Activated CD4-positive, alpha-beta T cell treated with anti-CD3 and anti-CD28 coated beads, Interleukin-2, amount 10 ng/mL, durations not matched to agents 7 days and 5 days (primary cell): ENCODE measurements at regions of chr12 and their contacts with region 1.

Region 1: DNA sequence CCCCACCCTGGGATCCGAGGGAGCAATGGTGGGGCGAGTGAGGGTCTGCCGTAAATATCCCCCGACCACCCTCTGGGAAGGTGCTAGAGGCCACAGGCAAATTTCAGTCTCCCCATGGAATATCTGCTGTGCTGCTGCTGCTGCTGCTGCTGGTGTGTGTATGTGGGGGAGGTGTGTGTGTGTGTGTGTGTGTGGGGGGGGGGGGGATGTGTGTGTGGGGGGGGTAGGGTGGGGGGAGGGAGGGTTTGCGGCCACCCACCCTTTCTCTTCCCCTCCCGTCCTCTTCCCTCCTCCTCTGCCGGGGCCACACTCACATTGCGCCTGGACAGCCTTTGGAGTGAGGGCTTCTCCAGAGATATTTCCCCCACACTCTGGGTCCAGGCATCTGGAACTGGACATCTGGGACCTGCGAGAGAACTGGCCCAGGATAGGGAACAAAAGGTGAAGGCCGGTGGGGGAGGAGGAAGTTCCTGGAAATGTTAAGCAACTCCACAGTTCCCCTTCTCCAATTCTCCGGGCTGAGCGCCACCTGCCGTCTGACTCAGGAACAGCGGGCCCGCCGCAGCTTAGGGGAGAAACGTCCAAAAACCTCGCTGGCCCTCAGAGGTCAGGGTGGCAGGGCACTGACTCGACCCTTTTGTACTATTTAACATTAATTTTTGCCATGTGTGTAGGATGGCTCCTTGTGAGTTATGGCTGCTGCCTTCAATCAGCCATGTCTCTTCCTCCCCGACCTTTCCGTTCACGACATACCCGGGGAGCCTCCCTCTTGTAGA is at the start of gene C1RL:
- DNase-seq: peak; percentile 76
- H3K4me3 Mint-ChIP-seq: peak within 1 kb of the TSS; percentile 96
- H3K27ac Mint-ChIP-seq: peak within 1 kb of the TSS; percentile 96
- H3K4me1 Mint-ChIP-seq: peaks cover 68% of the 10 kb centered on the region
- H3K27me3 Mint-ChIP-seq: no peaks in the 10 kb centered on the region
- total RNA-seq, gene C1RL: 31.2 to 31.4 TPM

Region 2: DNA sequence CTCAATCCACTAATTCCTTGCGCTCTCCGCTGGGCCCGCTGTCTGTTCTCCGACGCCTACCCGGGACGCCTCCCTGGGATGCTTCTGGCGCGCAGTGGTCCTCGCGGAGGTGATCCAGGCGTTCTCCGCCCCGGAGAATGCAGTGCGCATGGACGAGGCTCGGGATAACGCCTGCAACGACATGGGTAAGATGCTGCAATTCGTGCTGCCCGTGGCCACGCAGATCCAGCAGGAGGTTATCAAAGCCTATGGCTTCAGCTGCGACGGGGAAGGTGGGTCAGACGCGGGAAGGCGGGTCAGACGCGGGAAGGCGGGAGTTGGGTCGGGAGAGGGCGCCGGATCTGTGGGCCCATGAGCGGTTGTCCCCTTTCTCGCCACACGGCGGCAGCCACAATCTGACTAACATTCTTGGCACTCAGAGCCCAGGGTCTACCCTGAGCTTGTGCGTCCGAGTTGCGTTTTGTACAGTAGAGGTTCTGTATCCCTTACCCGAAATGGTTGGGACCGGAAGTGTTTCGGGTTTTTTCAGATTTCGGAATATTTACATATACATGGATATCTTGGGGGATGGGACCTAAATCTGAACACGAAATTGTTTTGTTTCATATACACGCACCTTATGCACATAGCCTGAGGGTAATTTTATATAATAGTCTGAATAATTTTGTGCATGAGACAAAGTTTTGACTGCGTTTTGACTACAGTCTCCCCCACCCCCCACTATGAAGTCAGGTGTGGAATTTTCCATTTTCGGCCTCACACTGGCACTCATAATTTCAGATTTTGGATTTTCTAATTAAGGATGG is 164.4 kb before region 1 on chr12:
- CTCF ChIA-PET with region 1: interaction called, 15 read pairs
- POLR2A ChIA-PET with region 1: interaction called, 28 read pairs
- DNase-seq: peak; percentile 92
- H3K4me3 Mint-ChIP-seq: peak overlapping the region; percentile 97
- H3K27ac Mint-ChIP-seq: peak overlapping the region; percentile 96
- H3K4me1 Mint-ChIP-seq: peaks cover 68% of the 10 kb centered on the region
- H3K27me3 Mint-ChIP-seq: no peaks in the 10 kb centered on the region

Region 3: DNA sequence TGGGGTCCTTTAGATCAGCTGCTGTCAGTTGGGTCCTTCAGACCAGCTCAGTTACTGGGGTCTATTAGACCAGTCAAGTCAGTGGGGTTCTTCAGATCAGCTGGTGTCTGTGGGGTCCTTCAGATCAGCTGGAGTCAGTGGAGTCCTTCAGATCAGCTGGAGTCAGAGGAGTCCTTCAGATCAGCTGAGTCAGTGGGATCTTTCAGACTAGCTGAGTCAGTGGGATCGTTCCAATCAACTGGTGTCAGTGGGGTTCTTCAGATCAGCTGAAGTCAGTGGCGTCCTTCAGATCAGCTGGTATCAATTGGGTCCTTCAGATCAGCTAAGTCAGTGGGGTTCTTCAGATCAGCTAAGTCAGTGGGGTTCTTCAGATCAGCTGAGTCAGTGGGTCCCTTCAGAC is 76.0 kb before region 1 on chr12:
- CTCF ChIA-PET with region 1: interaction called, 10 read pairs
- POLR2A ChIA-PET with region 1: no interaction called
- DNase-seq: no peak
- H3K4me3 Mint-ChIP-seq: no peak overlapping the region
- H3K27ac Mint-ChIP-seq: no peak overlapping the region
- H3K4me1 Mint-ChIP-seq: no peaks in the 10 kb centered on the region
- H3K27me3 Mint-ChIP-seq: peaks cover 2% of the 10 kb centered on the region

Region 4: DNA sequence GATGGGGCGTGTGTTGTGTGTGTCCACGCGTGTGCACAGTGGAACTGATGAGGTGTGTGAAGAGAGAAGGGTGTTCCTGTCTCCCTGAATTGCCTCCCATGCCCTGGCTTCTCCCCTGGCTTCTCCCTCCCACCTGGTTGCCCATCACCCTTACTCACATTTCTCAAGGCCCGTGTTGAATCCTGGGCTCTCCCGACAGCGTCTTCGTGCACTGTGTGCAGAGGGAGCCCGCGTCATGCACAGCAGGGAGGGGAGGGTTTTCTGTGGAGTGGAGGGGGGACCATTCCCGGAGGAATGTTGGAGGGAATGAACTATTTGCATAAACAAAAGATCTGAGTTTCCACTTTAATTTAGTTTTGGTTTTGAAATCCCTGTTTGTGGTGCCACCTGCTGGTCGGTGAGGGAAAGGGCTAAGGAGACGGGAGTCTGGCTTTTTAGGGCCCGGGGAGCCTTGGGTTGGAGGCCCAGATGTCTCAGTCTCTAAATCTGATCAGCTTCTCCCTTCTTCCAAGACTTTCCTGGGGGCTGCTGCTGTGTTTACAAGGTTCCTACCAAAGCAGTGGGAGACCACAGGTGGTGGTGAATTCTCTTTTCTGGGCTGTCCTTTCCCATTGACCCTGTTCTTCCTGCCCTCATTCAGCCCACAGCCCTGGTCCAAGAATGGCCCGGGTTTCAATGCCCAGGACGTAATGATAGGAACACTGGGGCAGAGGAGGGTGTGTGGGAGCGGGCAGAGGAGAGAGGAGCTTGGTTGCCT is 16.6 kb before region 1 on chr12 and contains the start of gene C1R:
- CTCF ChIA-PET with region 1: interaction called, 18 read pairs
- POLR2A ChIA-PET with region 1: no interaction called
- DNase-seq: peak; percentile 80
- H3K4me3 Mint-ChIP-seq: peak within 1 kb of the TSS; percentile 71
- H3K27ac Mint-ChIP-seq: peak within 1 kb of the TSS; percentile 80
- H3K4me1 Mint-ChIP-seq: peaks cover 8% of the 10 kb centered on the region
- H3K27me3 Mint-ChIP-seq: peaks cover 4% of the 10 kb centered on the region
- total RNA-seq, gene C1R: 2.2 to 3.5 TPM

Region 5: DNA sequence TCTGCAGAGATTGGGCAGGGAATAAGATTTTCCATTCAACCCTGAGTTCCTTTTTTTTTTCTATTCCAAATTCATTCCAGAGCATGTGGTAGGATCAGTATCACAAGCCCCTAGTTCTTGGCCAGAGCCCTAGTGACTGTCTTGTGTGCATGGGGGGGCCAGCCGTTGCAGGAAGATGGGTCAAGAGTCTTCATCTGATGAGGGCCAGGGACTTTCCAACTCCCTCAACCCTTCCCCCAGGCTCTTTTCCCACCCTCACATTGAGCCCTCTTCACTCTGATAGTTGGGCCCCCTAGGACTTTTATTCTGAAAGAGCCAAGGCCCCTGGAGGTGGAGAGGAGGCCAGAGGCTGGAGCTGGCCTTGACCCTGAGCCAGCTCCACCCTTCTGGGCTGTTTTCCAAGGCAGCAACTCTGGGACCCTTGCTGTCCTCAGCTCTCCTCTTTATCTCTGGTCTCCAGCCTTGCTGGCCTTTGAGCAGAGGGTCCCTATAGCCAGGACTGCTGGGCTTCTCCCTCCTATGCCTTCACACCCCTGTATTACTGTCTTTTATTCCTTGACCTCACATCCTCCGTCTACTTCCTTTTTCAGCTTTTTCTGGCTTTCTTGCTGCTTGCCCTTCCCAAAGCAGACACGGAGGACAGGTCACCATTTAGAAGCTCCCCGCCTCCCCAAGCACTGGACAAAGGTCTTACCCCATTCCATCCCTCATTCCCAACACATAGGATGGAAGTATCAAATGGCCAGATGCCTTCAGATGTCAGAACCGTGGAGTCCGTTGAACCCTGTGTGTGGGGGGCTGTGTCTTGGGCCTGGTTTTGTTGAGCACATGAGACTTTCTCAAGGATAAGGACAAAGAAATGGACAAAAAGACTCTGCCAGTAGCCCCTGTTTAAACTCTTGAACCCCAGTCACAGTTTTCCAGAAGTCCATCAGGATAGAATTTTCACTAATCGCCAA is 14.1 kb after region 1 on chr12:
- CTCF ChIA-PET with region 1: interaction called, 16 read pairs
- POLR2A ChIA-PET with region 1: interaction called, 3 read pairs
- DNase-seq: no peak
- H3K4me3 Mint-ChIP-seq: no peak overlapping the region
- H3K27ac Mint-ChIP-seq: no peak overlapping the region
- H3K4me1 Mint-ChIP-seq: peaks cover 2% of the 10 kb centered on the region
- H3K27me3 Mint-ChIP-seq: no peaks in the 10 kb centered on the region